ENCODE measurements at regions of chr12 and their contacts with region 1.

Region 1: GRCh38 chr12:68759852-68760251 is 13.9 kb downstream of the SLC35E3 start:
- DNase-seq: no peak
- ATAC-seq: no peak
- H3K4me3 ChIP-seq: no peak overlapping the region
- H3K27ac ChIP-seq: no peak overlapping the region
- H3K4me1 ChIP-seq: no peaks in the 10 kb centered on the region
- H3K27me3 ChIP-seq: no peaks in the 10 kb centered on the region
- CTCF ChIP-seq: no peak
- EP300 ChIP-seq: no peak
- POLR2A ChIP-seq: no peak
- RAD21 ChIP-seq: no peak

Region 2: GRCh38 chr12:68733661-68734071 is 26.2 kb before region 1 on chr12:
- CTCF ChIA-PET with region 1: no interaction called
- POLR2A ChIA-PET with region 1: interaction called, 10 read pairs
- RAD21 ChIA-PET with region 1: no interaction called
- SMC1A ChIA-PET with region 1: no interaction called
- in situ Hi-C with region 1: no loop called
- intact Hi-C with region 1: no loop called
- DNase-seq: no peak
- ATAC-seq: no peak
- H3K4me3 ChIP-seq: no peak overlapping the region
- H3K27ac ChIP-seq: no peak overlapping the region
- H3K4me1 ChIP-seq: no peaks in the 10 kb centered on the region
- H3K27me3 ChIP-seq: no peaks in the 10 kb centered on the region
- CTCF ChIP-seq: no peak
- EP300 ChIP-seq: no peak
- POLR2A ChIP-seq: no peak
- RAD21 ChIP-seq: no peak

Measured in GM12878 (cell line).